Activated naive CD4-positive, alpha-beta T cell treated with anti-CD3 and anti-CD28 coated beads for 36 hours (primary cell): ENCODE measurements at regions of chr10 and their contacts with region 1.

Region 1: DNA sequence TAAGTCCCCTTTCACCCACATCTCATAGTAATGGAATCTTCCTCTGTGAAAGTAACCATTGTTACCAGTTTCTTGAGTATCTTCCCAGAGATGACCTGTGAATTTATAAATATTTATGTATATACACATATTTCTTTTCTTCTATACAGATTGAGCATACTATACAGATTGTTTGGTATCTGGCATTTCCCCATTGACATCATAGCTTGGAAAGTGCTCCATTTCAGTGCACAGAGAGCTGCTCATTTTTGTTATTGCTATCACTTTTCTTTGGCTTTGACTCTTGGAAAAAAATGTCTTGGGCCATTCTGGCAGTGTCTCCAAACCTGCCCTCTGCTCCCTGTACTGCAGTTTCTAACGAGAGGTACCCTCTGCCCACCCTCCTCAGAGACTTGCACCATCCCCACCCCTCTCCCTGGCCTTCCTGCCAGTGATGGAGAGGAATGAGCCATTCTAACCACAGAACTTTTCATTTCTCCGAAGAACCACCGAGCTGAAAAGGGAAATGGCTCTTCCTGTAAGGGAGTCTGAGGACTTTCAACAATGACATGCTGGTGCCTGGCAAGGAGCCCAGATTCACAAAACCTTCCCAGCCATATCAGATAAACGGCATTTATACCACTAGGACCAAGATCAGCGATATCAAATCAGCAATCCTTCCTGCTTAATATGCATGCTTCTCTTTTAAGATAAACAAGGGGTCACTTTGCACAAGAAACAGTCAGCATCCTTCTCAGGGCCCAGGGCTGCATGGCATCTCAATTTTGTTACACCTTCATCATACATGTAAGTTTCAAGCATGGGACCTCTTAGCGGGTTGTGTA is 19.7 kb upstream of the CCSER2 start:
- DNase-seq: peak; percentile 85
- H3K4me3 Mint-ChIP-seq: peak overlapping the region; percentile 42
- H3K27ac Mint-ChIP-seq: peak overlapping the region; percentile 93
- H3K4me1 Mint-ChIP-seq: peaks cover 45% of the 10 kb centered on the region
- H3K27me3 Mint-ChIP-seq: peaks cover 1% of the 10 kb centered on the region

Region 2: GRCh38 chr10:84294766-84295447 is 13.8 kb before region 1 on chr10:
- CTCF ChIA-PET with region 1: interaction called, 4 read pairs
- intact Hi-C with region 1: loop called (anchors 1 kb)
- DNase-seq: peak; percentile 27
- H3K4me3 Mint-ChIP-seq: no peak overlapping the region
- H3K27ac Mint-ChIP-seq: no peak overlapping the region
- H3K4me1 Mint-ChIP-seq: peaks cover 21% of the 10 kb centered on the region
- H3K27me3 Mint-ChIP-seq: peaks cover 3% of the 10 kb centered on the region

Region 3: GRCh38 chr10:84333864-84334451 is 25.3 kb after region 1 on chr10:
- CTCF ChIA-PET with region 1: interaction called, 4 read pairs
- intact Hi-C with region 1: loop called (anchors 1 kb)
- DNase-seq: peak; percentile 79
- H3K4me3 Mint-ChIP-seq: peak overlapping the region; percentile 56
- H3K27ac Mint-ChIP-seq: peak overlapping the region; percentile 82
- H3K4me1 Mint-ChIP-seq: peaks cover 35% of the 10 kb centered on the region
- H3K27me3 Mint-ChIP-seq: no peaks in the 10 kb centered on the region